WTC11 (cell line): ENCODE measurements at regions of chr11 and their contacts with region 1.

Region 1: DNA sequence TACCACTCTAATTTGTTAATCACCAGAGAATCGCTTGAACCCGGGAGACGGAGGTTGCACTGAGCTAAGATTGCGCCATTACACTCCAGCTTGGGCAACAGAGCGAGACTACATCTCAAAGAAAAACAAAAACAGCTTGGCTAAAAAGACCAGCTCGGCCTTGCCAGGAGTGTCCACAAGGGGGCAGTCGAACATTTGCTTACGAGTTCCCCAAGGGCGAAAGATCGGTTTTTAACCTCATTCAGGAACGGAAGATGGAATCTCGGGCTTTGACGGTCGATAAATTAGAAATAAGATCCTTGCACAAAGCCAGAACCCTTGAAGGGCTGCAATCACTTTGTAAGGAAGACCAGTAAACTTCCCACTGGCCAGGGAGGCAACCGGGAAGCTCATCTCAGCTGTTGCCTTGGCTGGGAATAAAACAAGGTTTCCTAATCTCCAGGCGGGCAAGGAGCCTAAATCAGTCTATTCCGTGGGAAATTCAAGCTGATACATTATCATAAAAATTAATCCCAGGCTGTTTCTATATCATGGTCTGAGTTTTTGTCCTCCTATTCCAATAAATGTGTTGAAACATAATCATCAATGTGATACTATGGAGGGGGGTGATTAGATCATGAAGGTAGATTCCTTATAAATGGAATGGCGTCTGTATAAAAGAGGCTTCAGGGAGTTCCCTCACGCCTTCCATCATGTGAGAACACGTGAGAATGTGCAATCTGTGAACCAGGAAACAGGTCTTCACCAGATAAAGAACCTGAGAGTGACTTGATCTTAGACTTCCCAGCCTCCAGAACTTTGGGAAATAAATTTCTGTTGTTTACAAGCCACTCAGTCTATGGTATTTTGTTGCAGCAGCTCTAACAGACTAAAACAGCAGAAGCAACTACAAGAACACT is 14.9 kb upstream of the SLC29A2 start:
- DNase-seq: peak; percentile 95
- ATAC-seq: peak; percentile 74
- H3K4me3 Mint-ChIP-seq: peak overlapping the region; percentile 64
- H3K27ac Mint-ChIP-seq: no peak overlapping the region
- H3K4me1 Mint-ChIP-seq: peaks cover 6% of the 10 kb centered on the region; the same call in 1 of the 2 replicates
- H3K27me3 Mint-ChIP-seq: peaks cover 13% of the 10 kb centered on the region
- CTCF ChIP-seq: peak; percentile 79

Region 2: GRCh38 chr11:66336234-66337102 is 50.0 kb before region 1 on chr11 and contains the start of gene RIN1:
- CTCF ChIA-PET with region 1: interaction called, 11 read pairs
- POLR2A ChIA-PET with region 1: no interaction called
- DNase-seq: peak; percentile 57
- ATAC-seq: peak; percentile 70
- H3K4me3 Mint-ChIP-seq: peak within 1 kb of the TSS; percentile 82
- H3K27ac Mint-ChIP-seq: 0 out of 2 replicates have a peak within 1 kb of the TSS, but pooled peaks have one; percentile 78
- H3K4me1 Mint-ChIP-seq: peaks cover 16% of the 10 kb centered on the region
- H3K27me3 Mint-ChIP-seq: no peaks in the 10 kb centered on the region
- CTCF ChIP-seq: no peak
- total RNA-seq, gene RIN1: 4.7 to 5.5 TPM (median 5.0 TPM) in 3 replicates

Region 3: DNA sequence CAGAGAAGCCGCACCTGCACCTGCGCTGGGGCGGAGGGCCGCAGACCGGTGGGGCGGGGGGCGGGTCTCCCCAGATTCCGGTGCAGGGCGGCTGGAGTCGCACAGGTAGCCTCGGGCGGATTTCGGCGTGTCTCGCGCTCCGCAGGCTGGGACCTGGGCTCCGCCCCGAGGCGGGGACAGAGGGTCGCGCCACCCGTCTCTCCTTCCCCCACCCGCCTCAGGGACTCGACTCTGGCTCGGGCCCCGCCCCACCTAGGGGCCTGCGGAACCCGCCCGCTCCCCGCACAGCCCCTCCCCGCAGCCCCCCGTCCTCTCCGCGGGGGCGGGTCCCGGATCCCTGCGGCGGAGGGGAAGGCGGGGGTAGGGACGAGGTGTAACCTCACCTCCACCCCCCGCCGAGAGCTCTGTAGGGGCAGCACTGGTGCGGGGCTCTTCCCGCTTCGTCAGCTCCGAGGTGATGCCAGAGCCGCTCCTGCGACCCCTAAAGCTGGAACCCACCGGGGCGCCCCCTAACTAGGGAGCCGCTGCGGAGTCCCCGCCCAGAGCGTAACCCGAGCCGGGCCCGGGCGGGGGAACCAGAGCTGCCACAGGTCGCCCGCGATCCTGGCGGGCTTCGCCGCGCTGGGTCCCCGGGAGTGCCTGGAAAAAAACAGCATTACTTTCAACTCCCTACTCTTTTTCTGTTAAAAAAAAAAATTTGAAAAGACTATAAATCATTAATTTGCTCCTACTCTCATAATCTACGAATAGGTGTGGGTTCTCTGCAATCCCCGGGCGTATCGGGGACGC is 14.6 kb before region 1 on chr11 and contains the start of gene SLC29A2:
- CTCF ChIA-PET with region 1: interaction called, 53 read pairs
- POLR2A ChIA-PET with region 1: interaction called, 5 read pairs
- DNase-seq: peak; percentile 98
- ATAC-seq: peak; percentile 88
- H3K4me3 Mint-ChIP-seq: peak within 1 kb of the TSS; percentile 95
- H3K27ac Mint-ChIP-seq: peak within 1 kb of the TSS; percentile 96
- H3K4me1 Mint-ChIP-seq: peaks cover 27% of the 10 kb centered on the region
- H3K27me3 Mint-ChIP-seq: no peaks in the 10 kb centered on the region
- CTCF ChIP-seq: no peak
- total RNA-seq, gene SLC29A2: 30.2 to 36.6 TPM (median 35.3 TPM) in 3 replicates

Region 4: DNA sequence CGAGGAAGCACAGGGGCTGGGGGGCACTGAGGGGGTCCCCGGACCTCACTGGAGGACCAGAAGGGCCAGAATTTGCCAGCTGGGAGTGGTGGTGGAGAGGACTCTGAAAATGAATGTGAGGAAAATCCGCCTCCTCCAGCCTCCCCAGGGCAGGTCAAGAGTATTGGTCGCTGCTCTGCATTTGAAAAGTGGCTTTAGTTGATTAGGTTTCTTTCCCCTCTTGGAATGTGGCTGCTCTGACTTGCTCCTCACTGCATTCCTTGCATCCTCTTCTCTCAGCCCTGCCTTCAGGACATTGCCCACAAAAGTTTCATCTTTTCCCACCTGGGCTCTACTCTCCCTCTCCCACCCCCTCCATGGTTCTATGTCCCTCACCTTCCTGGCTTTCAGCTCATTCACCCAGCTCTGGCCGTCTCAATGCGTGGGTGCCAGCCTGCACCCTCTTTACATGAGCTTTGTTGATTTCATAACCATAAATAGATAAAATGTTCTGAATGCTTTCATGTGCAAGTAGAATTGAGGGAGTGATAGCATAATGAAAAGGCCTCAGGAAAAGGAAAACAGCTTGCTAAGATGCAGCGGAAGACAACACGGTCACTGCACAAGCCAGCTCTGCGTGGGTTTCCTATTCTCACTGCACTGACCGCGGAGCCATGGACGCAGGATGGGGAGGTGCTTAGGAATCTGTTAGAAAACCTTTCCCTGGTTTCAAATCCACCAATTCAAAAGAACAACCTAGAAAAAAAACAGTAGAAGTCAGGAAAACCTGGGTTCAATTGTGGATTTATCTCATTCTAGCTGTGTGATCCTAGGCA is 27.9 kb after region 1 on chr11:
- CTCF ChIA-PET with region 1: interaction called, 31 read pairs
- POLR2A ChIA-PET with region 1: no interaction called
- DNase-seq: peak; percentile 33
- ATAC-seq: peak; percentile 82
- H3K4me3 Mint-ChIP-seq: peak overlapping the region; percentile 39
- H3K27ac Mint-ChIP-seq: peak overlapping the region; percentile 78
- H3K4me1 Mint-ChIP-seq: peaks cover 46% of the 10 kb centered on the region
- H3K27me3 Mint-ChIP-seq: peaks cover 33% of the 10 kb centered on the region
- CTCF ChIP-seq: no peak

Region 5: DNA sequence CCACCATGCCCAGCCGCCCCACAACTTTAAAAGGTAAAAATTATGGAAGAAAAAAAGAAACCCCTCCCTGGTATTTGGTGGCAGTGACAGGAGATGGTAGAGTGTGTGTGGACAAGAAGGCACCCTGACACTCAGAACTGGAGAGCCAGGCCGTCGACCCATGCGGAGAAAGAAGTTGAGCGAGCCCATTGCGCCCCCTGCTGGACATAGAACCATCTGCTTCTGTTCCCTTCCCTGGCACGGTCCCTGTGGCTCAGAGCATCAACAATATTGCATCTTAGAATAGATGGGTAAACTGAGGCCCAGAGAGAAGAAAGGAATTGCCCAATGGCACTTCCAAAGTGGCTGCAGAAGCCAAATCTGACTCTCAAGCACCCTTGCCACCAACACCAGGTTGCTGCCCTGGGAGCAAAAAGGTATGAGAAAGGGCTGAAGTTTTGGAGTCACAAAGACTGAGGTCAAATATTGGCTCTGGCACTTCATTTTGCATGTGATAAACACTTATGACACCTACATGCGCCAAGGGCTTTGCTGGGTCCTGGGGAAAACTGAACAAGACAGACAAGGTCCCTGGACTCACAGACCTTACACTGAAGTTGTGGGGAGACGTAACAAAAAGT is 43.7 kb after region 1 on chr11:
- CTCF ChIA-PET with region 1: interaction called, 14 read pairs
- POLR2A ChIA-PET with region 1: interaction called, 4 read pairs
- DNase-seq: peak; percentile 83
- ATAC-seq: peak; percentile 92
- H3K4me3 Mint-ChIP-seq: no peak overlapping the region
- H3K27ac Mint-ChIP-seq: no peak overlapping the region
- H3K4me1 Mint-ChIP-seq: no peaks in the 10 kb centered on the region
- H3K27me3 Mint-ChIP-seq: peaks cover 9% of the 10 kb centered on the region
- CTCF ChIP-seq: peak; percentile 92

Region 6: GRCh38 chr11:66466225-66467027 is 80.0 kb after region 1 on chr11 and contains the start of gene PELI3:
- CTCF ChIA-PET with region 1: interaction called, 14 read pairs
- POLR2A ChIA-PET with region 1: no interaction called
- DNase-seq: peak; percentile 98
- ATAC-seq: peak; percentile 94
- H3K4me3 Mint-ChIP-seq: peak within 1 kb of the TSS; percentile 88
- H3K27ac Mint-ChIP-seq: peak within 1 kb of the TSS; percentile 90
- H3K4me1 Mint-ChIP-seq: peaks cover 43% of the 10 kb centered on the region
- H3K27me3 Mint-ChIP-seq: no peaks in the 10 kb centered on the region; the same call in 1 of the 2 replicates
- CTCF ChIP-seq: no peak
- total RNA-seq, gene PELI3: 6.7 to 7.8 TPM (median 6.8 TPM) in 3 replicates

Region 7: DNA sequence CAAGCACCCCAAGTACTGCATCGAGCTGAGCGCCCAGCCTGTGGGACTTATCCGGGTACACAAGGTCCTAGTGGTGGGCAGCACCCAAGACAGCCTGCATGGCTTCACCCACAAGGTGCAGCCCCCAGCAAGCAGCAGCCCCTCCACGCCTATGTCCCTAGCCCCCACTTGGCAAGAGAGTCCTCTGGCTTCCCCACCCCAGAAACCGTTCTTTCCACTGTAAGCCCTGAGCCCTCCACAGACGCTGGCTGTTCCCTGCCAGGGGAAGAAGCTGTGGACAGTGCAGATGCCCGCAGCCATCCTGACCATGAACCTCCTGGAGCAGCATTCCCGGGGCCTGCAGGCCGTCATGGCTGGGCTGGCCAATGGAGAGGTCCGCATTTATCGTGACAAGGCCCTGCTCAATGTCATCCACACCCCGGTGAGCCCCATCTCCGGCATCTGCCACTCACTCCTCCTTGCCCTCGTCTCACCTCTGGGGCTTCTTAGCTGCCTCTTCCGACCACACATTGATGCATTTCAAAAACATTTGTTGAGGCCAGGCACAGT is 137.1 kb after region 1 on chr11:
- CTCF ChIA-PET with region 1: no interaction called
- POLR2A ChIA-PET with region 1: no interaction called
- DNase-seq: no peak
- ATAC-seq: no peak
- H3K4me3 Mint-ChIP-seq: no peak overlapping the region
- H3K27ac Mint-ChIP-seq: no peak overlapping the region
- H3K4me1 Mint-ChIP-seq: no peaks in the 10 kb centered on the region
- H3K27me3 Mint-ChIP-seq: no peaks in the 10 kb centered on the region
- CTCF ChIP-seq: no peak